AG04450 (cell line): ENCODE measurements at regions of chr4 and their contacts with region 1.

Region 1: DNA sequence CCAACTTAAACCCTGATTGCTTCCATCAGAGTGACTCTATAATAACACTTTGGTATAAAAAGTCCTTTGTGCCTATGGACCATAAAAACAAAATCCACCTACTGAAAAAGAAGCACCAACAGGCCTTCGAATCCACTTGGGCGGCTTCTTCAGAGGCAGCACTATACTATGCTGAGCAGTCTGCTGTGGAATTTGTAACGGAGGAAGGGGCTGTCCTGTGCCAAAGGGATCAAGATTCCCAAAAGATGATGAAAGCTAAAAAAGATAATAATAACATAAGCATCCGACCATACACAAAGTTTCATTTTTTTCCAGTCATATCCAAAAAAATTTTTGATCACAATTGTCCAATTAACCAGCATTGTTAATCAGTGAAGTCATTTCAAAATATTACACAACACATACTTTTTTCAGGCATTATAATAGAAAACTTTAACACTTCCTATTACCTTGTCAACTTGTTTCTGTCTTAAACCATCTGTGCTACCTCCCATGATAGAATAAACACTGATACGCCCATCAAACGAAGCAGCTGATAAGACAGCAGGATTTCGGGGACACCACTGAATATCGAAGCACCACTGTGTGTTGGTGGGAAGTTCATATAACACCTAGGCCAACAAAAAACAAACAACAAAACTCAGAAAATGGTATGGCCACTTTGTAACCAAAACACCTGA is 24.1 kb downstream of the SEC31A start:
- DNase-seq: no peak
- H3K4me3 ChIP-seq: no peak overlapping the region
- H3K27ac ChIP-seq: peak overlapping the region; percentile 63
- H3K27me3 ChIP-seq: no peaks in the 10 kb centered on the region
- CTCF ChIP-seq: no peak

Region 2: GRCh38 chr4:82889287-82889686 is 22.4 kb after region 1 on chr4:
- CTCF ChIA-PET with region 1: no interaction called
- POLR2A ChIA-PET with region 1: interaction called, 10 read pairs
- DNase-seq: no peak
- H3K4me3 ChIP-seq: peak overlapping the region; percentile 90
- H3K27ac ChIP-seq: no peak overlapping the region
- H3K27me3 ChIP-seq: no peaks in the 10 kb centered on the region
- CTCF ChIP-seq: no peak